T-cell (primary cell): ENCODE measurements at regions of chr22 and their contacts with region 1.

Region 1: GRCh38 chr22:25067851-25068421 is 115.4 kb downstream of the KIAA1671 start:
- DNase-seq: peak; percentile 79 to 95 (median 87)
- ATAC-seq: peak; percentile 92 to 94 (median 92)
- H3K4me3 ChIP-seq: peak overlapping the region in 1 of 2 donors; percentile 25
- H3K4me3 Mint-ChIP-seq: peak overlapping the region; percentile 64 to 90 (median 72)
- H3K27ac ChIP-seq: peak overlapping the region; percentile 81
- H3K27ac Mint-ChIP-seq: peak overlapping the region; percentile 98 to 100
- H3K4me1 ChIP-seq: peaks cover 52 to 97% of the 10 kb centered on the region in 2 experiments
- H3K4me1 Mint-ChIP-seq: peaks cover 92 to 96% (median 95%) of the 10 kb centered on the region in 3 donors
- H3K27me3 ChIP-seq: no peaks in the 10 kb centered on the region
- H3K27me3 Mint-ChIP-seq: no peaks in the 10 kb centered on the region

Region 2: GRCh38 chr22:25057013-25057881 is 10.7 kb before region 1 on chr22:
- CTCF ChIA-PET with region 1: interaction called in 1 of 2 experiments, 6 read pairs
- POLR2A ChIA-PET with region 1: interaction called, 4 to 17 read pairs
- DNase-seq: peak in 34 of 35 experiments; percentile 18 to 83 (median 68)
- ATAC-seq: peak; percentile 43 to 73 (median 64)
- H3K4me3 ChIP-seq: no peak overlapping the region
- H3K4me3 Mint-ChIP-seq: no peak overlapping the region
- H3K27ac ChIP-seq: no peak overlapping the region
- H3K27ac Mint-ChIP-seq: no peak overlapping the region
- H3K4me1 ChIP-seq: peaks cover 19 to 42% of the 10 kb centered on the region in 2 experiments
- H3K4me1 Mint-ChIP-seq: peaks cover 25 to 39% (median 33%) of the 10 kb centered on the region in 3 donors
- H3K27me3 ChIP-seq: no peaks in the 10 kb centered on the region
- H3K27me3 Mint-ChIP-seq: no peaks in the 10 kb centered on the region

Region 3: GRCh38 chr22:25509374-25509791 is 441.4 kb after region 1 on chr22:
- CTCF ChIA-PET with region 1: no interaction called
- POLR2A ChIA-PET with region 1: no interaction called
- DNase-seq: no peak
- ATAC-seq: no peak
- H3K4me3 ChIP-seq: no peak overlapping the region
- H3K4me3 Mint-ChIP-seq: no peak overlapping the region
- H3K27ac ChIP-seq: no peak overlapping the region
- H3K27ac Mint-ChIP-seq: no peak overlapping the region
- H3K4me1 ChIP-seq: no peaks in the 10 kb centered on the region
- H3K4me1 Mint-ChIP-seq: no peaks in the 10 kb centered on the region
- H3K27me3 ChIP-seq: no peaks in the 10 kb centered on the region
- H3K27me3 Mint-ChIP-seq: no peaks in the 10 kb centered on the region